CD4-positive, alpha-beta T cell (primary cell): ENCODE measurements at regions of chr1 and their contacts with region 1.

Region 1: DNA sequence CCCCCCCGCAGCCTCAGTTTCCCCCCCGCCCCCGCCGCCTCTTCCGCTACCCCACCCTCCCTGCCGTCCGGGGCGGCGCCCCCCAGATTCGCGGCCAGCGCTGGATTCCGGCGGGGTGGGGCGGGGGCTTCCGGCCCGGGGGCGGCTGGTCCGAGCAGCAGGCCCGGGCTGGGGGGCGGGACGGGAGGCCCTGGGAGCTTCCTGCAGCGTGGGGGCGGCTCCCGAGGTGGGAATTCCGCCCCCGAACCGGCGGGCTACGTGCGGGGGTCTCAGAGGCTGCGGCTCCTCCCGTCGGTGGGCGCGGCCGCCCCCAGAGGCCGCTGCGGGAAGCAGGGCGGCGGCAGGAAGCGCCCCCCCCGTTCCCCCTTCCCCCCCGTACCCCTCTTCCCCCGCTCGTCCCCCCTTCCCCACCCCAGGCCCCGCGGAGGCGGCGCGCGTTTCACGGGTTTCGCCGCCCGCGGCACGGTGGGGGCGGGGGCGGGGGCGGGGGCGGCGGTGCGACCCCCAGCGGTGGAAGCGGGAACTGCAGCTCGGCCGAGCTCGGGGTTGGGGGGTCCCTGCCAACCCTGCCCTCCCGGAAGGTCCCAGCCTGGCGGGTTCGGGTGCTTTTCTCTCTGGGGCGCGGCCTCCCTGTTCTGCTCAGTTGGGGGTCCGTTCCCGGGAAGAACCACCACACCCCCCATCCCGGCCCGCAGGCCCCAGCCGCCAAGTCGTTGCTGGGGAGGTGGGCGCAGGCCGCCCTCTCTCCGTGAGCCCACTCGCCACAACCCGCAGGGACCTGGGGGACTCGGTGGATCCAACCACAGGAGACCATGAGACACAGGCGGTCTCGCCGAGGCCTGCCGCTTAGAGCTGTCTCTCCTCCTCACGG is 76.3 kb downstream of the MORN1 start:
- DNase-seq: peak; percentile 41 to 86 (median 66)
- ATAC-seq: peak; percentile 45
- H3K4me3 ChIP-seq: peak overlapping the region; percentile 56
- H3K4me3 Mint-ChIP-seq: peak overlapping the region; percentile 83
- H3K27ac ChIP-seq: peak overlapping the region; percentile 47 to 61
- H3K27ac Mint-ChIP-seq: peak overlapping the region; percentile 81
- H3K4me1 ChIP-seq: peaks cover 61% of the 10 kb centered on the region
- H3K4me1 Mint-ChIP-seq: peaks cover 19% of the 10 kb centered on the region
- H3K27me3 ChIP-seq: no peaks in the 10 kb centered on the region
- H3K27me3 Mint-ChIP-seq: no peaks in the 10 kb centered on the region
- CTCF ChIP-seq: peak; percentile 96

Region 2: DNA sequence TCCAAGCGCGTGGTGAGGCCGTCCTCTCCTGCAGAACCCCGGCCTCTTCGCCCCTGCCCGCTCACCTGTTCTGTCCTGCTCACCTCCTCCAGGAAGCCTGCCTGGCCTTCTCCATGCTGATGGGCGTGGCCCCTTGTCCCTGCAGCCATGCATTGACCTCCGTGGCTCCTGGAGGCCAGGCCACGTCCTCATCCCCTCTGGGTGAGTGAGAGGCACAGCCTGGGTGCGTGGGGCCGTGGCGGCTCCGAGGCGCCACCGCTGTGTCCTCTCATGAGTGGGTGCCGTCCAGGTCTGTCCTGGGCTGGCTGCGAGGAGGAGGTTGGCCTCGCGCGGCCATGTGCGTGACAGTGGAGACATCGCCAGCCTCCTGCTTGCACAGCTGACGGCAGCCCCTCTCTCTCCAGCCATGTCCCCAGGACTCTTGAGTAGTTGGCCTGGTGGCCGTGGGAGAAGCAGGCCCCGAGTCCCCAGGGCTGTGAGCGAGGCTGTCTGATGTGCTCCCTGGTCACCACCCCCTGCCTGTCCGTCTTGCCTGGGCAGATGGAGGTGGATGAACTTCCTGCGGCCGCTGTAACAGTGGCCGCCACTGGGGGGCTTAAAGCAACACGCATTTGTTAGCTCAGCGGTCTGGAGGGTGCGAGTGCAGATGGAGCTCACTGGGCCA is 206.7 kb before region 1 on chr1:
- CTCF ChIA-PET with region 1: no interaction called
- POLR2A ChIA-PET with region 1: no interaction called
- intact Hi-C with region 1: no loop called
- DNase-seq: no peak
- ATAC-seq: no peak
- H3K4me3 ChIP-seq: no peak overlapping the region
- H3K4me3 Mint-ChIP-seq: no peak overlapping the region
- H3K27ac ChIP-seq: no peak overlapping the region
- H3K27ac Mint-ChIP-seq: no peak overlapping the region
- H3K4me1 ChIP-seq: no peaks in the 10 kb centered on the region
- H3K4me1 Mint-ChIP-seq: no peaks in the 10 kb centered on the region
- H3K27me3 ChIP-seq: no peaks in the 10 kb centered on the region
- H3K27me3 Mint-ChIP-seq: no peaks in the 10 kb centered on the region
- CTCF ChIP-seq: no peak

Region 3: GRCh38 chr1:2233997-2234761 is 80.9 kb before region 1 on chr1:
- CTCF ChIA-PET with region 1: interaction called, 8 read pairs
- POLR2A ChIA-PET with region 1: interaction called, 12 read pairs
- intact Hi-C with region 1: loop called in 1 of 2 experiments (anchors 5 kb)
- DNase-seq: peak; percentile 62 to 93 (median 80)
- ATAC-seq: peak; percentile 49
- H3K4me3 ChIP-seq: peak overlapping the region; percentile 95
- H3K4me3 Mint-ChIP-seq: peak overlapping the region; percentile 99
- H3K27ac ChIP-seq: peak overlapping the region; percentile 80 to 92
- H3K27ac Mint-ChIP-seq: peak overlapping the region; percentile 100
- H3K4me1 ChIP-seq: peaks cover 99% of the 10 kb centered on the region
- H3K4me1 Mint-ChIP-seq: peaks cover 71% of the 10 kb centered on the region
- H3K27me3 ChIP-seq: no peaks in the 10 kb centered on the region
- H3K27me3 Mint-ChIP-seq: peaks cover 20% of the 10 kb centered on the region
- CTCF ChIP-seq: no peak

Region 4: DNA sequence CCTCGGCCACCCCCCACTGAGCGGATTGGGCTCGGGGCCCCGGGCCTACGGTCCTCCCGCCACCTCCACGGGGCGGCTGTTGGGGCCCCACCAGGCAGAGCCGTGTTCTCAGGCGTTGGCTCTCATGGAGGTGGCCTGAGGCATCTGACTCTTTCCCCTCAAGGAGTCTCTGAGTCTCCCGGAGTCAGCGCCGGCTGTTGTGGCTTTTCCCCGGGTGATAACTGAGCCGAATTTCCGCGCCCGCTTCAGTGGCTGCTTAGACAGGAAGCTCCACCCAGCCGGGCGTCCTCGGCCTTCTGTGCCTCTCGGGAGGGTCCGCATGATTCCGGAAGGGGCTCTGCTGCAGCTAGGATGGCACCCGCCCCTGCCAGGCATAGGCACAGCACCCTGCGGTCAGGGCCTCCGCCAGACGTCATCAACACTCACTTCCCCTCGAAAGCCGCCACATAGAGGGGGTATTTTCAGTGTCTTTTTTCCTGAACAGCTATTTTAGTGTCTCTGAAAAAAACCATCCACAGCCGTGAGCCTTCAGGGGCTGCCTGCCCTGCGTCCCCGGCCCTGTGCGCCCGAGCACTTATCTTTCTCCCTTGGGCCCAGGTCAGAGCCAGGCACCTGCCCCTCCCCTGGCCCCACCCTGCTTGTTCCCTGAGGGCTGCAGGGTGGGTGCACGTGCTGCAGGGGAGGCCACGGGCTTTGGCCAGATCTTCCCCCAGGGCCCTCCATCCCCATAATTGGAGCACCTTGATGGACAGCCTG is 14.0 kb before region 1 on chr1:
- CTCF ChIA-PET with region 1: interaction called, 5 read pairs
- POLR2A ChIA-PET with region 1: interaction called, 34 read pairs
- intact Hi-C with region 1: no loop called
- DNase-seq: peak; percentile 86 to 99 (median 93)
- ATAC-seq: peak; percentile 76
- H3K4me3 ChIP-seq: peak overlapping the region; percentile 61
- H3K4me3 Mint-ChIP-seq: peak overlapping the region; percentile 91
- H3K27ac ChIP-seq: peak overlapping the region; percentile 97 to 98
- H3K27ac Mint-ChIP-seq: peak overlapping the region; percentile 99
- H3K4me1 ChIP-seq: peaks cover 72% of the 10 kb centered on the region
- H3K4me1 Mint-ChIP-seq: peaks cover 49% of the 10 kb centered on the region
- H3K27me3 ChIP-seq: no peaks in the 10 kb centered on the region
- H3K27me3 Mint-ChIP-seq: no peaks in the 10 kb centered on the region
- CTCF ChIP-seq: no peak

Region 5: GRCh38 chr1:2345223-2346080 is 30.4 kb after region 1 on chr1:
- CTCF ChIA-PET with region 1: no interaction called
- POLR2A ChIA-PET with region 1: no interaction called
- intact Hi-C with region 1: no loop called
- DNase-seq: peak in 1 of 14 experiments; percentile 5
- ATAC-seq: no peak
- H3K4me3 ChIP-seq: no peak overlapping the region
- H3K4me3 Mint-ChIP-seq: no peak overlapping the region
- H3K27ac ChIP-seq: no peak overlapping the region
- H3K27ac Mint-ChIP-seq: no peak overlapping the region
- H3K4me1 ChIP-seq: no peaks in the 10 kb centered on the region
- H3K4me1 Mint-ChIP-seq: no peaks in the 10 kb centered on the region
- H3K27me3 ChIP-seq: no peaks in the 10 kb centered on the region
- H3K27me3 Mint-ChIP-seq: no peaks in the 10 kb centered on the region
- CTCF ChIP-seq: no peak

Region 6: DNA sequence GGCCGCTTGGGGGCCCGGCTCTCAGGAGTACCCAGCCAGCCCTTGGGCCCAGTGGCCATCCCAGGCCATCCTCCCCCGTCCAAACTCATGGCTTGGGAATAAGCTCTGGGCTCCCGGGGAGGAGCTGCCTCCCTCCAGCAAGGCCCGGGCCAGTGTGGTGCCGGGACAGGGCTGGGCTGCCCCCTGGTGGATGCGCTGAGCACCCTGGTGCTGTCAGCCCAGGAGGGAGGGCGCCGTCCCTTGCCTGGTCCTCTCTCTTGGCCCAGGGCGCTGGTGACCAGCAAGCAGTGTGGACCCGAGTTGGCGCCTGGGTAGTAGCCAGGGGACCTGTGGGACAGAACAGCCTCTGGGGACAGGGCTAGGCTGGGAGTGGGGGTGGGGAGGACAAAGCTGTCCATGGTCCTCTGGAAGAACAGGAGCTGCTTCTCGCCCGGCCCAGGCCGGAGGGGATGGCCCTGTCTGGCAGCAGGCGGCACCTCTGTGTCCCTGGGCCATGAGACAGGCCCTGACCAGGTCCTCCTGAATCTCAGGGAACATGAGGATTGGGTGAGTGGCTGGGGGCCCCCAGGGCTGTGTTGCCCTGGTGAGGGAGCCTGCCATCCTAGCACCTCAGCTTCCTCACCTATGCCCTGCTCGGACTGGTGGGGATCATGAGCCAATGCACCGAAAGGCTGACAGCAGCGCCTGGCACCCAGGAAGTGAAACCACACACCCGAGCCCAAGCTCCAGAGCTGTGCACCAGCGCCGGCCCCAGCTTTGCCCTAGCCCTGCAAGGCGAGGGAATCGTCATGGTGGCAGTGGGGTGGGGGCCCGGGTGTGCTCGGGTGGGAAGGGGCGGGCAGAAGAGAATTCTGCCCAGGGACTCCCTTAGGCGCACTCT is 66.9 kb after region 1 on chr1:
- CTCF ChIA-PET with region 1: no interaction called
- POLR2A ChIA-PET with region 1: interaction called, 3 read pairs
- intact Hi-C with region 1: loop called (anchors 5 to 10 kb)
- DNase-seq: peak; percentile 63 to 86 (median 74)
- ATAC-seq: peak; percentile 95
- H3K4me3 ChIP-seq: no peak overlapping the region
- H3K4me3 Mint-ChIP-seq: no peak overlapping the region
- H3K27ac ChIP-seq: no peak overlapping the region
- H3K27ac Mint-ChIP-seq: no peak overlapping the region
- H3K4me1 ChIP-seq: peaks cover 13% of the 10 kb centered on the region
- H3K4me1 Mint-ChIP-seq: no peaks in the 10 kb centered on the region
- H3K27me3 ChIP-seq: no peaks in the 10 kb centered on the region
- H3K27me3 Mint-ChIP-seq: no peaks in the 10 kb centered on the region
- CTCF ChIP-seq: peak; percentile 87

Region 7: GRCh38 chr1:2412519-2413233 is 97.6 kb after region 1 on chr1 and contains the start of gene PEX10:
- CTCF ChIA-PET with region 1: no interaction called
- POLR2A ChIA-PET with region 1: no interaction called
- intact Hi-C with region 1: no loop called
- DNase-seq: peak; percentile 95 to 99 (median 98)
- ATAC-seq: peak; percentile 89
- H3K4me3 ChIP-seq: peak within 1 kb of the TSS; percentile 67
- H3K4me3 Mint-ChIP-seq: peak within 1 kb of the TSS; percentile 94
- H3K27ac ChIP-seq: peak within 1 kb of the TSS; percentile 69 to 72
- H3K27ac Mint-ChIP-seq: peak within 1 kb of the TSS; percentile 92
- H3K4me1 ChIP-seq: peaks cover 57% of the 10 kb centered on the region
- H3K4me1 Mint-ChIP-seq: peaks cover 32% of the 10 kb centered on the region
- H3K27me3 ChIP-seq: no peaks in the 10 kb centered on the region
- H3K27me3 Mint-ChIP-seq: no peaks in the 10 kb centered on the region
- CTCF ChIP-seq: no peak
- total RNA-seq, gene PEX10: 12.0 to 12.5 TPM